Posterior vena cava (tissue), 2 donors: ENCODE measurements at regions of chr4 and their contacts with region 1.

Region 1: DNA sequence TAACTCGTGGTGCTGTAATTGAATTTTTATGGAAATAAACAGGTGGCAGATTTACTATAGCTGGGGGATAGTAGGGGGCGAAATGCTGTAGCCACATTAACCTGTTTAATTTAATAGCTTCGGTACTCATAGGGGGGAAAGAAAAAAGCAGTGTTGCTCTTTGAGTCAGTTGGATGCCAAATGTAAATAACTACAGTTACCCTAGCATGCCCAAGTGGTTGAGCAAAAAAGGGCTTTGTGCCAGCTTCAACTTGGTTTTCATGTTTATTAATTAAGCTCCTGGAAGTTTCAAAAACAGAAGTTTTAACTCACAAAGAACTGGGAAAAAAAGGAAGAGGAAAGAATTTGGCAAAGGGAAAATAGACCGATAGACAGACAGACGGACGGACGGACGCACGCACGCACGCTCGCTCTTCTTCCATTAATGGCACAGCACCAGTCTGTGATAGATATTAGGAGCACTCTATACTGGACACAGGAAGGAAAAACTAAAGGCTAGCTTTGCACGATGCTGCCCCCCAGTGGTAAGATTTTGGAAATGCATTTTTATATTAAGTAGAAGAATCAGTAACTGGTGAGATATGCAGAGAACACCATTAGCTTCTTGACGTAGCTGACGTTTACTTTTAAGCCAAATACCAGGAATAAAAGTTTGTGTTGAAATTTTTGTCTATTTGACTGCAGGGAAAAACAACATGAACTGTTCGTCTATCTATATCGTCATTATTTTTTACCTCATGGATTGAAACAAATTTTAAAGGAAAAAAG is 151.8 kb downstream of the SLC7A11 start:
- DNase-seq: no peak

Region 2: DNA sequence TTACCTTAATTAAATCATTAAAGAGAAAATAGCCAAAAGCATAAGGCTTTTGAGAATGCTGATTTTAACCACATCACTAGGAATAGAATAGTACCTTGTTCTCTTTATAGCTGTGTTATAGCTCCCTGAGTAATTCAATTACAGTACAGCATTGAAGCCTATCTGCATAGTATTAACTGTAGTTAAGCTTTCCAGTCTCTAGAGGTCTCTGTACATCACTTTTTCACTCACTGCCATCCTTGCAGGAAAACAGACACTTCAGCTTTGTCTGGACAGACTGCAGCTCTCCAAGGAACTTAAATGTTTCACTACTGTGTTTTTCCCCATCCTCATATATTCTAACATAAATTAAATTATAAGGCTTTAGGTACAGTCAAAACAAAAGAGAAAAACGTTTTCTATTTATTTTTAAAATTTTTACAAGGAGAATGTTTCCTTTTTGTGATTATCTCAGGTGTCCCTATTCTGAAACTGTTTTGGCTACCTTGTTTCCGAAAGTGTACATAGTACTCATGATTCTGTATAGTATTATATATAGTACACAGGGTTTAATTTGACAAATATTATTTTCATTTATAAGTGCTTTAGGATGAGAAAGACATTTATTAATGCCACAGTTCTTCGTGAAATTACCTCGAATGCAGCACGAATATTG is 965.9 kb before region 1 on chr4:
- intact Hi-C with region 1: loop called in 1 of 2 experiments (anchors 10 kb)
- DNase-seq: no peak

Region 3: GRCh38 chr4:137647375-137647774 is 443.0 kb before region 1 on chr4:
- intact Hi-C with region 1: no loop called
- DNase-seq: no peak

Region 4: DNA sequence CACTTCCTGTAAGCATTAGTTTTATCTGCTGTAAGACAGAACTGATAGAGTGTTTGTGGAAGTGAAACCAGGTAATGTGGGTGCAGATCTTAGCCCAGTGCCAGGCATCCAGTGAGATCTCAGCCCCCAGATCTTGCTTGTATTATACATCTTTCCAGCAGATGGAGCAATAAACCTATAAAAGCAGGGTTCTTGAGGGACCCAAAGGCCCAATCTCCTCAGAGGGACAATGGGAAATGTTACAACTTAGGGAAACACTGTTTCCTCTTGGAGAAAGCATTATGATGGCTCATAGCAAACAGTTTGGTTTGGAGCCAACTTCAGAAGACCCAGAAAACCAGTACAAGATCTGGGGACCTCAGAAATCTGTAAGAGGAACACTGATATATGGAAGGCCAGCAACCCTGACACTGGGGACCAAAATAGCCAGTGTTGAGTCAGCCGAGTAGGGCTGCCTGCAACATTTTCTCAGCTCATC is 54.5 kb before region 1 on chr4:
- intact Hi-C with region 1: loop called (anchors 10 kb)
- DNase-seq: peak; percentile 25

Region 5: GRCh38 chr4:138680989-138681604 is 590.8 kb after region 1 on chr4:
- intact Hi-C with region 1: loop called in 1 of 2 experiments (anchors 10 kb)
- DNase-seq: peak; percentile 92

Region 6: GRCh38 chr4:138875891-138876613 is 785.7 kb after region 1 on chr4:
- intact Hi-C with region 1: loop called in 1 of 2 experiments (anchors 5 kb)
- DNase-seq: no peak